ENCODE measurements at regions of chr1 and their contacts with region 1.

Region 1: DNA sequence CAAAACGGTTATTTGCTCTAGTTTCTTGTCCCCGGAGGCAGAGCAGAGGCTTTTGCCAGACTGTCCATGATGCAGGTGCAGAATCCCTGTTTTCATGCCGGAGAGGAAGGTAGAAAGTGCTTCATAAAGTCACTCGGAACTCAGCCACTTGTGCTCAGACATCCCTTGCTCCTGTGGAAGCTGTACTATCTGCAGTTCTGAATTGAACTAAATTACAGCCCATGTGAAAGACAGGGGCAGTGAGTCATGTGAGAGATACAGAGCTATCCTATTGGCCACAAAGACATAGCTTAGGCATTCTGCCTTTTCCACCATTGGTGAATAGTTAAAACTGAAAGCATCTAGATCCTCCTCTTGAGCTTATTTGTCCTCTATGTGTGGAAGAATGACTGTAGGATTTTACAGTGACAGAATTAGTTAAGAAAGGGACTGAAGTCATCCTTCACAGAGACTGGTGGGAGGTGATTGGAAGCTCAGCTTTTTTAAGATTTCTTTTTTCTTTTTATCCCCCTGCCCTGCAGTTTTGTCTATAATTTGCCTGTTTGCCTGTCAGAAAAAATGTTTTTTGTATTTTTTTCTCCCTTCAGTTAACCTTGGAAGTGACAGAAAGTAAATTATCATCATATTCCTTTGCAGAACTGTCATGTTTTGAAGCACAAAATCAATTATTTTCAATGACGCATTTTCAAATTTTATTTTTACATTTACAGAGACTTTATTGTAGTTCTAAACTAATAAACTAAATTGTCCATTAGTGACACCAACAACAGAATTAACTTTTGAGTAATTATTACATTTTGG is 298.6 kb downstream of the PTPRC start:
- DNase-seq: peak; percentile 51
- ATAC-seq: peak; percentile 92
- H3K4me3 Mint-ChIP-seq: no peak overlapping the region
- H3K27ac Mint-ChIP-seq: peak overlapping the region; percentile 91
- H3K4me1 Mint-ChIP-seq: peaks cover 20% of the 10 kb centered on the region
- H3K27me3 Mint-ChIP-seq: no peaks in the 10 kb centered on the region

Region 2: DNA sequence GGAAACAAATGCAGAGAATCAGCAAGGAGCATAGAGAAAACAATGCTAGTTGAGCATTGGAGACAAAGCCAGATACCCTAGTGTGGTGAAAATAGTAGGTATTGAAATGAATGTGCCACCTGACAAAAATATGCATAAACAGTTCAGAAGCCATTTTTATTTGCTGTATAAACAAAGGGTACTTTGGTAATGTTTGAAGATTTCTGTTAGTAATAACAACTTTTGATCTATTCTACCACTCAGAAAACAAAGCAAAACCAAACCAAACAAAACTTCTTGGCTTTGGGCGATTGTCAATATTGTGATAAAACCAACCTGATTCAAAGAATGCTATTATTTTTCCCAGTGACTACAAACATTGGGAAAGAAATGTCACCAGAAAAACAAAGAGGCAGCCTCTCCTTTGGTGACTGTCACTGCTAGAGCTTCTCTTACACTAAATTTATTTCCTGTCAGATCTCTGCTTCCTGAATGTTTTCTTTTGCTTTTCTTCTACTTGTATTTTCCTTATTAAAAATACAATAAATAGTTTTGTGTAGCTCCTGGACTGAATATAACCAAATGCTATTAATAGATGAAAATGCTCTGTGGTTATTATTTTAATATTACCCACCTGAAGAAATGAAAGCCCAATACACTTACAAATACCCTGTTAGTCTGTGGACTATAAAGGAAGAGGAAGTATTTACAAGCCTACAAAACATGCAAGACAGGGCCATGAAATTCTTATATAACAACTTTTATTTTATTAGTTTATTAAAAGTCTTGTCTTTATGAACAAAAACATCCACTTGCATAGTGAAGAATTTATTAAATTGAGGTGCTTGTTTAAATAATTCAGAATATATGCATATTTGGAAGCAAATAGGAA is 402.6 kb before region 1 on chr1:
- POLR2A ChIA-PET with region 1: no interaction called
- DNase-seq: no peak
- ATAC-seq: peak; percentile 38
- H3K4me3 Mint-ChIP-seq: peak overlapping the region; percentile 68
- H3K27ac Mint-ChIP-seq: peak overlapping the region; percentile 74
- H3K4me1 Mint-ChIP-seq: peaks cover 49% of the 10 kb centered on the region
- H3K27me3 Mint-ChIP-seq: no peaks in the 10 kb centered on the region

Region 3: DNA sequence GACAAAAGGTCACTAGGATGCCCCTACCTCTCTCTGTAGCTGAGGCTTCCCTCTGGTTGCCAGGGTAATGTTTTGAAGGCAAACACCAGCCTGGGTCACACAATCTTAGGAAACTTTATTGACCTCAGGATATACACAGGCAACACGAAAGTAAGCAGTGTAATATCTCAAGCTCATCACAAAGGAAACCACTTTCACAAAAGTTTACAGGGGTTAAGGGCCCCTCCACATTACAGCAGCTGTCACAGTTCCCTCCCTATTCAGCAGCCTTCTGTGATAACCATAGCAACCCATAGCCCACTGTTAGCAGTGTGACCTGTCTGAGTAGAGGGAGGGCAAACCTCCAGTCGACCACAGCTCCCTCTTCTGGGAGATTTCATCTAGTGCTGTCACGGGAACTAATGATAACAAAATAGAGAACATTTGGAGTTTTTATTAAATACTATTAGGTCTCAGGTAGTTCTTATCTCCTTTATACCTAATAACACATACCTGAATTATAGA is 148.8 kb before region 1 on chr1:
- POLR2A ChIA-PET with region 1: no interaction called
- DNase-seq: no peak
- ATAC-seq: peak; percentile 75
- H3K4me3 Mint-ChIP-seq: no peak overlapping the region
- H3K27ac Mint-ChIP-seq: no peak overlapping the region
- H3K4me1 Mint-ChIP-seq: peaks cover 4% of the 10 kb centered on the region
- H3K27me3 Mint-ChIP-seq: no peaks in the 10 kb centered on the region

Region 4: GRCh38 chr1:198829944-198830343 is 107.5 kb before region 1 on chr1:
- POLR2A ChIA-PET with region 1: no interaction called
- DNase-seq: no peak
- ATAC-seq: peak; percentile 41
- H3K4me3 Mint-ChIP-seq: no peak overlapping the region
- H3K27ac Mint-ChIP-seq: peak overlapping the region; percentile 9
- H3K4me1 Mint-ChIP-seq: peaks cover 13% of the 10 kb centered on the region
- H3K27me3 Mint-ChIP-seq: peaks cover 2% of the 10 kb centered on the region

Region 5: DNA sequence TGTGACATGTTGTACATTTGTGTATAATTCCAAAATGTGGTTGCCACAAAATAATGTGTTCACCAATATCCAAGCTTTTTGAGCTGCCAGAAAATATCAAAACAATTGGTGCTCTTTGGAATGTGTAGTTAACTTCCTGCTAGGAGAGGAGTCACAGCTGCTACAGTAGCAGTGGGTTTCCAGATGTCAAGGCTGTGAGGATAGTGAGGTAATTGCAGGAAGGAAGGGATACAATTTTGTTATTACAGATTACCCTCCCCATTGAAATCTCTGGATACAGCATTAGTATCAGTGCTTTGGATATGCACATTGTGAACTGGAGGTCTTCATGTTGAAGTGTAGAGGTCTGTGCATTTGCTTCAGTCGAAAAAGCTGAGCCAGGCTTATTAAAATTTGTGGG is 45.4 kb before region 1 on chr1:
- POLR2A ChIA-PET with region 1: no interaction called
- DNase-seq: no peak
- ATAC-seq: no peak
- H3K4me3 Mint-ChIP-seq: no peak overlapping the region
- H3K27ac Mint-ChIP-seq: no peak overlapping the region
- H3K4me1 Mint-ChIP-seq: peaks cover 12% of the 10 kb centered on the region
- H3K27me3 Mint-ChIP-seq: no peaks in the 10 kb centered on the region

Region 6: GRCh38 chr1:198947445-198947844 is 10.0 kb after region 1 on chr1:
- POLR2A ChIA-PET with region 1: interaction called, 10 read pairs
- DNase-seq: no peak
- ATAC-seq: no peak
- H3K4me3 Mint-ChIP-seq: no peak overlapping the region
- H3K27ac Mint-ChIP-seq: no peak overlapping the region
- H3K4me1 Mint-ChIP-seq: peaks cover 6% of the 10 kb centered on the region
- H3K27me3 Mint-ChIP-seq: no peaks in the 10 kb centered on the region

Region 7: GRCh38 chr1:198967566-198967965 is 30.1 kb after region 1 on chr1:
- POLR2A ChIA-PET with region 1: interaction called, 20 read pairs
- DNase-seq: no peak
- ATAC-seq: no peak
- H3K4me3 Mint-ChIP-seq: peak overlapping the region; percentile 66
- H3K27ac Mint-ChIP-seq: peak overlapping the region; percentile 79
- H3K4me1 Mint-ChIP-seq: peaks cover 46% of the 10 kb centered on the region
- H3K27me3 Mint-ChIP-seq: no peaks in the 10 kb centered on the region

Region 8: DNA sequence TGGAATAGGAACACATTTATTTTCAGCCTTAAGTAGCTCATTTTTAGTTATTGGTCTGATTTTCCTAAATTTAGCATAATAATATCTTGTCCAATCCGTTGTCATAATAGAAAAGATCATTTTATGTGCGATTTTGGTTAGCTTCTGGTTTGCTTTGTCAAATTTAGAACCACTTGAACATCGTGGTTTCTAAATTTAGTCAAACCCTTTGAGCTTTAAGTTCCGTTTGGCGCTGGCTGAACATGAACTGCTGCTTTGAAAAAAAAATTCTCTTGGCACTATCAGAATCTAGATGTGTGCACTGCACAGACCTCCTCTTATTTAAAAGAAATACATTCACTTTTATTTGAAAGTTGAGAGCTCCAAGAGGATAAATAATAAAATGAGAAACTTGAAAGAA is 72.0 kb after region 1 on chr1:
- POLR2A ChIA-PET with region 1: interaction called, 29 read pairs
- DNase-seq: no peak
- ATAC-seq: peak; percentile 88
- H3K4me3 Mint-ChIP-seq: peak overlapping the region; percentile 70
- H3K27ac Mint-ChIP-seq: peak overlapping the region; percentile 84
- H3K4me1 Mint-ChIP-seq: peaks cover 35% of the 10 kb centered on the region
- H3K27me3 Mint-ChIP-seq: no peaks in the 10 kb centered on the region

Region 9: DNA sequence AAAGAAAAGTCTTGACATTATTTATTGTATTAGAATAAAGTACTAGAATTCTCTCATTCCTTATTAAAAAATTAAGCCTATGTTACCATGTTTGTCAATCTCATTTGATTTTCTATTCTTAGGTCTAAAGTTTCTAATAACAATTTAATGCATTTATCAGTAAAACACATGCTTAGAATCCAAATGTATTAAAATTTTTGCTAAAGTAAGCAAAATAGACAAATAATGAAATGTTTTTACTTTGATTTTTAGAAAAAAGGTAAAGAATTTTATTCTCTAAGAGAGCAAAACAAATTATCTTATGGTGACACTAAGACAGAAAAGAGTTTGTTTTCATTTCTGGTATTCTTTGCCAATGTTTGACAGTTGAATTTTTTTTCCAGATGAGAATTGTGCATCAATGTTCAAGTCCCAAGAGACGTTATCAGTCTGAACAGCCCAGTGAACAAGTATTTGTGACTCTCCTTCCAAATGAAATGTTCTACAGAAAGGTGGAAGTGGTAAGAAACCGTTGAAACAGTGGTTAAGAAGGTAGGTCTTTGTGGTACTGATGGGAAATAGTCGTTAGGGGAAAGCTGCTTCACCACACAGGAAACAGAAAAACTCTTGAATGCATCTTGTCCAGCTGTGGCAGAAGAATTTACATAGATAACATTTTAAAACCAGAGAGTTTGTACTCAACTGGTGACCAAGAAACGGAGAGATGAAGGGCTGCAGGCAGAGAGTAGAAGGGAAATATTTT is 103.9 kb after region 1 on chr1:
- POLR2A ChIA-PET with region 1: interaction called, 27 read pairs
- DNase-seq: no peak
- ATAC-seq: peak; percentile 88
- H3K4me3 Mint-ChIP-seq: peak overlapping the region; percentile 55
- H3K27ac Mint-ChIP-seq: peak overlapping the region; percentile 89
- H3K4me1 Mint-ChIP-seq: peaks cover 38% of the 10 kb centered on the region
- H3K27me3 Mint-ChIP-seq: no peaks in the 10 kb centered on the region

Region 10: GRCh38 chr1:199113265-199113869 is 175.9 kb after region 1 on chr1:
- POLR2A ChIA-PET with region 1: interaction called, 14 read pairs
- DNase-seq: peak; percentile 67
- ATAC-seq: peak; percentile 67
- H3K4me3 Mint-ChIP-seq: no peak overlapping the region
- H3K27ac Mint-ChIP-seq: no peak overlapping the region
- H3K4me1 Mint-ChIP-seq: peaks cover 7% of the 10 kb centered on the region
- H3K27me3 Mint-ChIP-seq: no peaks in the 10 kb centered on the region

Measured in activated naive CD8-positive, alpha-beta T cell treated with anti-CD3 and anti-CD28 coated beads, Interleukin-2, amount 10 ng/mL, durations not matched to agents 7 days and 5 days (primary cell).